CD14-positive monocyte (primary cell): ENCODE measurements at regions of chr12 and their contacts with region 1.

Region 1: DNA sequence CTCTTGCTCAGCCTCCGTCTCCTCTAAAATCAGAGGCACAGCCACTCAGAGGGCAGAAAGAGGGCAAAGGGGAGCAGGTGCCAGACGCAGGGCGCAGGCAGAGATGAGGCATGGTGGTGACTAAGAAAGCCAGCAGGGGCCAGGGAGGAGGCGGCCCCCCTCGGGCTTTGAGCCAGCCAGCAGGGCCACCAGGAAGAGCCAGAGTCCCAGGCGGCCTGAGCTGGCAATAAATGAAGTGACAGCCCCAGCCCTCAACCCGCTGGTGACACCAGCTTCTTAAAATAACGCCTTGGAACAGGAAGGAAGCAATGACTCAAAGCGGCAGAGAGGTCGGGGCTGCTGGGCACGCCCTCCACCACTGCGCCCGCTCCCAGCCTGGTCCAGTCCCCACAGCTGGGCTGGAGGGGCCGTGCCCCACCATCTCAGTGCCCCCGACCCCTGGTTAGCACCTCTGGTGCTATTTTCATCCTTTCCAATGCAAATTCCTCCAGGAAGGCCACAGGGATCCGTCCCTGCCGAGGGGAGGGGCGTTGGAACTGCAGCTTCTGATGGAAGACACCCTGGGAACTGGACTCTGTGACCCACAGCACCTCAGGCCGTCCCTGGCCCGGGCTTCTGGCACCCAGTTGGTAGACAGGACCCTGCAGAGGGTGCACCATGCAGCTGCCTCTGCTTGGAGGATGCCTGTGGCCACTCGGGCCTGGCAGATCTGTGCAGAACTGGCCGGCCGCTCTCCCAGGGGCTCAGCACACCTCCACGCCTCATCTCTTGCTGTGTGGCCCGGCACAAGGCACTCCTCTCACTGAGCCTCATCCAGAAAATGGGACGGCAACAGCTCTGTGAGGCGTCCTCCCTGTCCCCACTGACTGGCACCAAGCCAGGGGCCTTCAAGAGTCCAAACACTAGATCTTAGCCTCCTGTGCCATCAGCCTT is 113.7 kb downstream of the NCOR2 start:
- DNase-seq: peak; percentile 98 to 99 (median 99)
- H3K4me3 ChIP-seq: peak overlapping the region in 1 of 3 experiments; percentile 47
- H3K4me3 Mint-ChIP-seq: peak overlapping the region; percentile 65 to 67
- H3K27ac ChIP-seq: peak overlapping the region; percentile 73 to 85
- H3K27ac Mint-ChIP-seq: peak overlapping the region; percentile 78 to 95 (median 90)
- H3K4me1 ChIP-seq: peaks cover 64 to 67% of the 10 kb centered on the region in 2 donors
- H3K4me1 Mint-ChIP-seq: peaks cover 55% of the 10 kb centered on the region
- H3K27me3 ChIP-seq: no peaks in the 10 kb centered on the region
- H3K27me3 Mint-ChIP-seq: peaks cover 0 to 3% (median 3%) of the 10 kb centered on the region in 3 donors
- CTCF ChIP-seq: no peak

Region 2: GRCh38 chr12:124391340-124392261 is 62.1 kb before region 1 on chr12:
- intact Hi-C with region 1: loop called (anchors 5 to 10 kb)
- DNase-seq: peak; percentile 93 to 96 (median 94)
- H3K4me3 ChIP-seq: peak overlapping the region; percentile 32 to 85 (median 43)
- H3K4me3 Mint-ChIP-seq: peak overlapping the region; percentile 96 to 98
- H3K27ac ChIP-seq: peak overlapping the region; percentile 99 to 100
- H3K27ac Mint-ChIP-seq: peak overlapping the region; percentile 99 to 100 (median 100)
- H3K4me1 ChIP-seq: peaks cover 72 to 77% of the 10 kb centered on the region in 2 donors
- H3K4me1 Mint-ChIP-seq: peaks cover 63% of the 10 kb centered on the region
- H3K27me3 ChIP-seq: no peaks in the 10 kb centered on the region
- H3K27me3 Mint-ChIP-seq: peaks cover 0 to 2% (median 2%) of the 10 kb centered on the region in 3 donors
- CTCF ChIP-seq: no peak

Region 3: DNA sequence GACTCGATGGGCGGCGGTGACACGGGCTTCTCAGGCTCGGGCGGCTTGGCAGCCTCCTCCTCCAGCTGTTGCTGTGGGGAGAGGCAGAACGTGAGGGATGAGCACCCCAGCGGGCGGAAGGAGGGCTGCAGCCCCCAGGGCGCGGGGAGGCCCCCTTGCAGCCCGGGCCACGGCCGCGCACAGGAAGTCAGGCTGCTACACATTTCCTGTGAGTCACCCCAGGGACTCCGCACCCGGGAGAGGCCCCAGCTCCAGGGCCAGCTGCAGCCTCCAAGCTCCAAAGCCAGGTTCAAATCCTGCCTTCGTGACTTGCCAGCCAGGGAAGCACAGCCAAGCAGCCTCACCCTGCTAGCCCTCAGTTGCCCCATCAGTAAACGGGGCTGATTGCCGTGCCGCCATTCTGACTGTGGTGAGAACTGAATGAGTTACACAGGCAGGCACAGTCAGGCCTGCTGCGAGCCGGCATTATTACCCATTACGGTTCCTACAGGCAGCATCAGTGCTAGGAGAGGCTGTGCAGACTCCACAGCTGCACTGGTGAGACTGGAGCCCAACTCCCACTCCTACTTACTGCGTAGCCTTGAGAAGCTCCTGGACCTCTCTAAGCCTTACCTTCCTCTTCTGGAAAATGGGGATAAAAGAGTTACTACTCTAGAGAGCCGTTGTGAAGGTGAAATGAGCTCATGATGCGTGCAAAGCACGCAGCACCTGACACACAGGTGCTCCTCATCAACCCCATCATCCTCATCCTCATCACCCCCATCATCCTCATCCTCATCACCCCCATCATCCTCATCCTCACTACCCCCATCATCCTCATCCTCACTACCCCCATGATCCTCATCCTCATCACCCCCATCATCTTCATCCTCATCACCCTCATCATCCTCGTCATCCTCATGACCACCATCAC is 12.8 kb after region 1 on chr12:
- intact Hi-C with region 1: loop called in 1 of 2 experiments (anchors 1 kb)
- DNase-seq: peak; percentile 95 to 98 (median 96)
- H3K4me3 ChIP-seq: peak overlapping the region in 1 of 3 experiments; percentile 52
- H3K4me3 Mint-ChIP-seq: peak overlapping the region; percentile 60 to 68
- H3K27ac ChIP-seq: peak overlapping the region; percentile 37 to 70
- H3K27ac Mint-ChIP-seq: peak overlapping the region; percentile 62 to 93 (median 87)
- H3K4me1 ChIP-seq: peaks cover 33 to 37% of the 10 kb centered on the region in 2 donors
- H3K4me1 Mint-ChIP-seq: peaks cover 37% of the 10 kb centered on the region
- H3K27me3 ChIP-seq: no peaks in the 10 kb centered on the region
- H3K27me3 Mint-ChIP-seq: peaks cover 0 to 3% (median 0%) of the 10 kb centered on the region in 3 donors
- CTCF ChIP-seq: peak; percentile 61

Region 4: GRCh38 chr12:124527861-124528561 is 74.3 kb after region 1 on chr12:
- intact Hi-C with region 1: no loop called
- DNase-seq: no peak
- H3K4me3 ChIP-seq: no peak overlapping the region
- H3K4me3 Mint-ChIP-seq: no peak overlapping the region
- H3K27ac ChIP-seq: no peak overlapping the region
- H3K27ac Mint-ChIP-seq: peak overlapping the region in 2 of 7 donors; percentile 33 to 80
- H3K4me1 ChIP-seq: no peaks in the 10 kb centered on the region
- H3K4me1 Mint-ChIP-seq: peaks cover 12% of the 10 kb centered on the region
- H3K27me3 ChIP-seq: no peaks in the 10 kb centered on the region
- H3K27me3 Mint-ChIP-seq: peaks cover 0 to 2% (median 0%) of the 10 kb centered on the region in 3 donors
- CTCF ChIP-seq: no peak

Region 5: GRCh38 chr12:124545508-124546418 is 92.1 kb after region 1 on chr12:
- intact Hi-C with region 1: loop called in 1 of 2 experiments (anchors 5 kb)
- DNase-seq: peak; percentile 80 to 86 (median 82)
- H3K4me3 ChIP-seq: peak overlapping the region in 1 of 3 experiments; percentile 45
- H3K4me3 Mint-ChIP-seq: peak overlapping the region in 1 of 2 donors; percentile 54
- H3K27ac ChIP-seq: peak overlapping the region; percentile 59 to 72
- H3K27ac Mint-ChIP-seq: peak overlapping the region; percentile 65 to 90 (median 84)
- H3K4me1 ChIP-seq: peaks cover 70 to 78% of the 10 kb centered on the region in 2 donors
- H3K4me1 Mint-ChIP-seq: peaks cover 75% of the 10 kb centered on the region
- H3K27me3 ChIP-seq: no peaks in the 10 kb centered on the region
- H3K27me3 Mint-ChIP-seq: peaks cover 0 to 1% (median 0%) of the 10 kb centered on the region in 3 donors
- CTCF ChIP-seq: no peak

Region 6: GRCh38 chr12:124713436-124714082 is 259.9 kb after region 1 on chr12:
- intact Hi-C with region 1: no loop called
- DNase-seq: peak; percentile 92 to 97 (median 95)
- H3K4me3 ChIP-seq: peak overlapping the region in 1 of 3 experiments; percentile 41
- H3K4me3 Mint-ChIP-seq: peak overlapping the region; percentile 71 to 89
- H3K27ac ChIP-seq: peak overlapping the region; percentile 95 to 100
- H3K27ac Mint-ChIP-seq: peak overlapping the region; percentile 99 to 100 (median 100)
- H3K4me1 ChIP-seq: peaks cover 57 to 69% of the 10 kb centered on the region in 2 donors
- H3K4me1 Mint-ChIP-seq: peaks cover 58% of the 10 kb centered on the region
- H3K27me3 ChIP-seq: no peaks in the 10 kb centered on the region
- H3K27me3 Mint-ChIP-seq: peaks cover 0 to 2% (median 0%) of the 10 kb centered on the region in 3 donors
- CTCF ChIP-seq: no peak

Region 7: GRCh38 chr12:124774462-124775167 is 320.9 kb after region 1 on chr12:
- intact Hi-C with region 1: loop called (anchors 2 to 5 kb)
- DNase-seq: peak; percentile 87 to 94 (median 89)
- H3K4me3 ChIP-seq: peak overlapping the region; percentile 16 to 63 (median 26)
- H3K4me3 Mint-ChIP-seq: peak overlapping the region; percentile 59 to 82
- H3K27ac ChIP-seq: peak overlapping the region; percentile 87 to 97
- H3K27ac Mint-ChIP-seq: peak overlapping the region; percentile 94 to 97 (median 96)
- H3K4me1 ChIP-seq: peaks cover 66 to 70% of the 10 kb centered on the region in 2 donors
- H3K4me1 Mint-ChIP-seq: peaks cover 71% of the 10 kb centered on the region
- H3K27me3 ChIP-seq: no peaks in the 10 kb centered on the region
- H3K27me3 Mint-ChIP-seq: peaks cover 2 to 10% (median 5%) of the 10 kb centered on the region in 3 donors
- CTCF ChIP-seq: no peak